ENCODE measurements at regions of chr19 and their contacts with region 1.

Region 1: GRCh38 chr19:45817010-45817724 is 2.1 kb upstream of the RSPH6A start:
- DNase-seq: peak; percentile 98
- H3K4me3 Mint-ChIP-seq: no peak overlapping the region
- H3K27ac Mint-ChIP-seq: peak overlapping the region; percentile 78
- H3K4me1 Mint-ChIP-seq: peaks cover 3% of the 10 kb centered on the region
- H3K27me3 Mint-ChIP-seq: peaks cover 19% of the 10 kb centered on the region

Region 2: GRCh38 chr19:45508861-45509691 is 308.1 kb before region 1 on chr19:
- CTCF ChIA-PET with region 1: no interaction called
- DNase-seq: peak; percentile 61
- H3K4me3 Mint-ChIP-seq: peak overlapping the region; percentile 87
- H3K27ac Mint-ChIP-seq: peak overlapping the region; percentile 82
- H3K4me1 Mint-ChIP-seq: peaks cover 64% of the 10 kb centered on the region
- H3K27me3 Mint-ChIP-seq: no peaks in the 10 kb centered on the region

Region 3: GRCh38 chr19:45746866-45747265 is 70.3 kb before region 1 on chr19:
- CTCF ChIA-PET with region 1: no interaction called
- DNase-seq: no peak
- H3K4me3 Mint-ChIP-seq: no peak overlapping the region
- H3K27ac Mint-ChIP-seq: no peak overlapping the region
- H3K4me1 Mint-ChIP-seq: no peaks in the 10 kb centered on the region
- H3K27me3 Mint-ChIP-seq: peaks cover 48% of the 10 kb centered on the region

Region 4: GRCh38 chr19:45770192-45771101 is 46.7 kb before region 1 on chr19:
- CTCF ChIA-PET with region 1: interaction called, 12 read pairs
- DNase-seq: peak; percentile 92
- H3K4me3 Mint-ChIP-seq: peak overlapping the region; percentile 83
- H3K27ac Mint-ChIP-seq: peak overlapping the region; percentile 89
- H3K4me1 Mint-ChIP-seq: peaks cover 23% of the 10 kb centered on the region
- H3K27me3 Mint-ChIP-seq: peaks cover 81% of the 10 kb centered on the region

Region 5: GRCh38 chr19:45828945-45829344 is 11.8 kb after region 1 on chr19:
- CTCF ChIA-PET with region 1: interaction called, 23 read pairs
- DNase-seq: no peak
- H3K4me3 Mint-ChIP-seq: no peak overlapping the region
- H3K27ac Mint-ChIP-seq: no peak overlapping the region
- H3K4me1 Mint-ChIP-seq: peaks cover 24% of the 10 kb centered on the region
- H3K27me3 Mint-ChIP-seq: no peaks in the 10 kb centered on the region

Measured in activated naive CD4-positive, alpha-beta T cell treated with anti-CD3 and anti-CD28 coated beads, Interleukin-2, amount 10 ng/mL, durations not matched to agents 7 days and 5 days (primary cell).